Dorsolateral prefrontal cortex (tissue), 120 donors: ENCODE measurements at regions of chr3 and their contacts with region 1.

Region 1: GRCh38 chr3:112327371-112327951 is 5.5 kb upstream of the CD200 start:
- DNase-seq: no peak
- H3K4me3 ChIP-seq: no peak overlapping the region
- H3K27ac ChIP-seq: peak overlapping the region in 1 of 59 donors; percentile 33
- H3K27me3 ChIP-seq: peaks cover 0 to 5% (median 0%) of the 10 kb centered on the region in 45 donors
- CTCF ChIP-seq: peak; percentile 10 to 92 (median 76)

Region 2: GRCh38 chr3:112136959-112137693 is 190.3 kb before region 1 on chr3:
- intact Hi-C with region 1: loop called in 1 of 2 experiments (anchors 5 kb)
- DNase-seq: peak in 3 of 10 donors; percentile 32 to 68 (median 52)
- H3K4me3 ChIP-seq: no peak overlapping the region
- H3K27ac ChIP-seq: no peak overlapping the region
- H3K27me3 ChIP-seq: no peaks in the 10 kb centered on the region
- CTCF ChIP-seq: peak; percentile 38 to 82 (median 66)

Region 3: DNA sequence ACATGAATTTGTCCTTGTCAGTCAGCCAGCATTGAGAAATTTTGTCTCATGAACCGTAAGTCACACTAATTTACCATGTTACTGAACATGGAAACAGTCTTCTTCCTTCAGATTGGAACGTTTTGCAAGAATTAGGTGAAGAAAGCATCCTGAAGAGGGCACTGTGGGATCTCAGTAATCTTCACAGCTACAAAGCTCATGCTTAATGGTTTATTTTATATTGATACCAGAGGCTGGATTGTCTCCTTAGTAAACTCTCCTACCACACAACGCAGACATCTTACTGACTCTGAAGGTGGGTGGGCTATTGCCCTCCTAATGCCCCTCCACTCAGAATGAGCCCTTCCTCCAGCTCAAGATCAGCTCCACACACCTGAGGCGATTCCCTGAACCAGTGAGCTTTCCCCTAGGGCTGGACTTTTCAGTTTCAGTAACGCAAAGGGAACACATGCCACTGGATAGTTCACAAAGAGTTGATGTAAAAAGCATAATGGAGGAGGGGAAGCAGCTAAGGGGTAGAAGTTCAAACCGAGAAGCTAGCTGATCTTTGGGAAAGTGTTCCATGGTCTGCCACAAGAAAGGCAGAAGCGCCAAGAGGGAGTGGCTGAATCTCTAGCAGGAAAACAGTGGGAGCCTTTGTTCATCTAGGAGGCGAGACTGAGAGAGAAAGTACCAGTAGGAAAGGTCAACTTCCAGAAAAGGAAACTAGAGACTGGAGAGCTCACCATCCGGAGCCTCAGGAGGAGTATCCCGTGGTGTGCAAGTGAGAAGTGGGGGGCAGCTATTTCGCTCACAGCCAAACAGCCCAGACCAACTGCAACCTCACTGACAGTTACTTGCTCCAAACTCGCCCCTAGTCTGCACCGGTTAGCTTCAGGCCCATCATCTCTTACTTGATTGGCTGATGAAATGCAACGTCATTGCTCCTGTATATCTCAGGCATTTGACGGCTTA is 33.8 kb before region 1 on chr3 and contains the start of gene SLC9C1:
- intact Hi-C with region 1: loop called (anchors 5 kb)
- DNase-seq: peak in 2 of 10 donors; percentile 14 to 41
- H3K4me3 ChIP-seq: peak within 1 kb of the TSS; percentile 15 to 71 (median 51)
- H3K27ac ChIP-seq: peak within 1 kb of the TSS in 56 of 59 donors; percentile 4 to 92 (median 68)
- H3K27me3 ChIP-seq: no peaks in the 10 kb centered on the region
- CTCF ChIP-seq: peak; percentile 40 to 88 (median 72)
- total RNA-seq, gene SLC9C1: 0.12 to 1.4 (median 0.27) TPM in 12 of 120 experiments, not detected in the others

Region 4: DNA sequence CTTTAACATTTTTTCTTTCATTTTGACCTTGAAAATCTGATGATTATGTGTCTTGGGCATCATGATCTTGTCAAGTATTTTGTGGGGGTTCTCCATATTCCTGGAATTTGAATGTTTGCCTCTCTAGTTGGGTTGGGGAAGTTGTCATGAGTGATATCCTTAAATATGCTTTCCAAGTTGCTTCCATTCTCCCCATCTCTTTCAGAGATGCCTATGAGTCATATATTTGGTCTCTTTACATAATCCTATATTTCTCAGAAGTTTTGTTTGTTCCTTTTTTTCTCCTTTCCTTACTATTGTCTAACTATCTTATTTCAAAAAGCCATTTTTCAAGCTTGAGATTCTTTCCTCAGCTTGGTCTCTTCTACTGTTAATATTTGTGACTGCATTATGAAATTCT is 382.4 kb after region 1 on chr3:
- intact Hi-C with region 1: loop called in 1 of 2 experiments (anchors 10 kb)
- DNase-seq: no peak
- H3K4me3 ChIP-seq: no peak overlapping the region
- H3K27ac ChIP-seq: no peak overlapping the region
- H3K27me3 ChIP-seq: peaks cover 0 to 3% (median 0%) of the 10 kb centered on the region in 45 donors
- CTCF ChIP-seq: no peak